ENCODE measurements at regions of chr19 and their contacts with region 1.

Region 1: DNA sequence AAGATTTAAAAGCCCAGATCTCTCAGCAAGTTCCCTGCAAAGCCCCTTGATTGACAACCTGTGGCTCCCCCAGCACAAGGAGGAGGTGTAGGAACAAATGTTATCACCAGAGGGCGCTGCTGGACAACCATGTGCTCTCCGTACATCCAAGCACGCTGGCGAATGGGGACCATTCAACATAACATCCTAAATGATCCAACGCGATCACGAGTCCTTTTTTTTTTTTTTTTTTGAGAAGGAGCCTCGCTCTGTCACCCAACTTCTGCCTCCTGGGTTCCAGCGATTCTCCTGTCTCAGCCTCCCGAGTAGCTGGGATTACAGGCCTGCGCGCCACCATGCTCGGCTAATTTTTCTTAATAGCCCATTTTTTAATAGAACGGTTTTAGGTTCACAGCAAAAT is 52.0 kb downstream of the NWD1 start:
- DNase-seq: peak; percentile 84
- H3K4me3 ChIP-seq: no peak overlapping the region
- H3K27ac ChIP-seq: no peak overlapping the region
- H3K4me1 ChIP-seq: no peaks in the 10 kb centered on the region
- H3K27me3 ChIP-seq: no peaks in the 10 kb centered on the region
- CTCF ChIP-seq: peak; percentile 78

Region 2: GRCh38 chr19:16726916-16727315 is 44.7 kb before region 1 on chr19:
- intact Hi-C with region 1: no loop called
- DNase-seq: no peak
- H3K4me3 ChIP-seq: no peak overlapping the region
- H3K27ac ChIP-seq: no peak overlapping the region
- H3K4me1 ChIP-seq: no peaks in the 10 kb centered on the region
- H3K27me3 ChIP-seq: no peaks in the 10 kb centered on the region
- CTCF ChIP-seq: no peak

Region 3: DNA sequence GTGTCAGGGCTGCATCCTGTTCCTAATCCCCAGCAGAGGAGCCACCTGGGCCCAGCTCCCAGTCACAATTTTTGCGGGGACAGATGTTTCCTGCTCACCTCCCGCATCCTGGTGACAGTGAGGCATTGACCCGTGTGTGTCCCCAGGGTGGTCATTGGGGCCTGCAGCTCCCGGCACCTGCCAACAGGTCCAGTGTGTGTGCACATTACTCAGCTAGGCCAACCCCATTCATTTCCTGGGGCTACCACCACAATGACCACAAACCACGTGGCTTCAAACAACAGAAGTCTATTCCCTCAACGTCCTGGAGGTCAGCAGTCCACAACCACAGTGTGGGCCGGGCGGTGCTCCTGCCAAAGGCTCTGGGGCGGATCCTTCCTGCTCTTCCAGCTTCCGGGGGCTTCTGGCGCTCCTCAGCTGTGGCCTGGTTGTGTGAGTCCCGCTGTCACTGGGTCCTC is 105.3 kb after region 1 on chr19:
- intact Hi-C with region 1: no loop called
- DNase-seq: no peak
- H3K4me3 ChIP-seq: no peak overlapping the region
- H3K27ac ChIP-seq: no peak overlapping the region
- H3K4me1 ChIP-seq: no peaks in the 10 kb centered on the region
- H3K27me3 ChIP-seq: no peaks in the 10 kb centered on the region
- CTCF ChIP-seq: no peak

Region 4: DNA sequence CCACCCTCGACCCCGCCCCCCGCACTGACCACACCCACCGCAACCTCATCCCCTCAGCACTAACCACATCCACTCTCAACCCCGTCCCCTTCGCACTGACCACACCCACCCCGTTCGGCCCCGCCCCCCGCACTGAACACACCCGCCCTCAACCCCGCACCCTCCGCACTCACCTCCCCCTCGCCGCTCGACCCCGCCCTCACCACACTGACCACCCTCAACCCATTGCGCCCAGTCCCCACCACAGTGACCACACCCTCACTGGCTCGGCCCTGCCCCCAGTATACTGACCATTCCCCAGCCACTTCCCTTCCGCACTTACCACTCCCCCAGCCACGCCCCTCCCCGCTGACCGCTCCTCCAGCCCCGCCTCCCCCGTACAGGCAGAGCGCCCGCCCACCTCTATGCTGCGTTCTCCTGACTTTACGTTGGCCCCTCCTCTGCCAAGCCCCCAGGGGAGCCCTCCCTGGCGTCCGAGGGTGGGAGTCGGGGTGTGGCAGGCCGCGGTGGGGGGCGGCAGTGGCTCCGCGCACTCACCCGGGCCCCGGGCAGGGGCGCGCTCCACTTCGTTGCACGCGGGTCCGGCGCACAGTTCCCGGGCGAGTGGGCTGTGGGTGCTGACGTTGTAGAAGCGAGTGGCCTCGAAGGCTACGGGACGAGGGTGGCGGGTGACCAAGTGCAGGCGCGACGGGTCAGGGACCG is 125.7 kb after region 1 on chr19:
- intact Hi-C with region 1: loop called (anchors 5 kb)
- DNase-seq: peak; percentile 95
- H3K4me3 ChIP-seq: peak overlapping the region; percentile 48
- H3K27ac ChIP-seq: peak overlapping the region; percentile 45
- H3K4me1 ChIP-seq: no peaks in the 10 kb centered on the region
- H3K27me3 ChIP-seq: peaks cover 7% of the 10 kb centered on the region
- CTCF ChIP-seq: no peak

Region 5: DNA sequence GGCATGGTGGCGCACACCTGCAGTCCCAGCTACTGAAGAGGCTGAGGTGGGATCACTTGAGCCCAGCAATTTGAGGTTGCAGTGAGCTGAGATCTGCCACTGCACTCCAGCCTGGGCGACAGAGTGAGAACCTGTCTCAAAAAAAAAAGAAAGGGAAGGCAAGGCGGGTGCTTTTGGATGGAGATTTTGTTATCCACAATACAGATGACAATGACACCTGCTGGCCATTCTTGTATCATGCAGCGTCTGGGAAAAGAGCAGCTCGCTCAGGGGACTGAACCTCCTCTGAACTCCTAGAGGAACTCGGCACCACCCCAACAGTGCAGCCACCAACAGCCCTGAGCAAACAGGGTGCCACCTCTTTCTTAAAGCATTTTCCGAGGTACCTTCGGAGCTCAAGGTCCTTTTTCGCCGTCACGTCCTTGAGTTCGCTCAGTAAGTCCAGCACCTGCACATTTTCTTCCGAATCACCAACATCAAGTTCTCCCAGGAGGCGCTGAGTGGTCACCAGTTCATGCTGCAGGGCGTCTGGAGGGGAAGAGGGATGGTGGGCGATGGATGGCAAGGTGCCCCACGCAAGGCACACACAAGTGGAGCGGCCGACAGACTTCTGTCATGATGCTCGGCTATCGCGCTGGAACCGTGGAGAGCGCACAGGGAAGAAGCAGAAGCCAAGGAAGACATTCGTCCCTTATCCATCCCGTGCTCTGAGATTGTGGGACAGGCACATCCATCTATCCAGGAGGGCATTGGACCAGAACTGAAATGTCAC is 281.0 kb after region 1 on chr19:
- intact Hi-C with region 1: loop called (anchors 1 kb)
- DNase-seq: peak; percentile 66
- H3K4me3 ChIP-seq: no peak overlapping the region
- H3K27ac ChIP-seq: no peak overlapping the region
- H3K4me1 ChIP-seq: no peaks in the 10 kb centered on the region
- H3K27me3 ChIP-seq: no peaks in the 10 kb centered on the region
- CTCF ChIP-seq: peak; percentile 60

Measured in colonic mucosa (tissue), 4 donors.